HepG2 (cell line): ENCODE measurements at regions of chr19 and their contacts with region 1.

Region 1: DNA sequence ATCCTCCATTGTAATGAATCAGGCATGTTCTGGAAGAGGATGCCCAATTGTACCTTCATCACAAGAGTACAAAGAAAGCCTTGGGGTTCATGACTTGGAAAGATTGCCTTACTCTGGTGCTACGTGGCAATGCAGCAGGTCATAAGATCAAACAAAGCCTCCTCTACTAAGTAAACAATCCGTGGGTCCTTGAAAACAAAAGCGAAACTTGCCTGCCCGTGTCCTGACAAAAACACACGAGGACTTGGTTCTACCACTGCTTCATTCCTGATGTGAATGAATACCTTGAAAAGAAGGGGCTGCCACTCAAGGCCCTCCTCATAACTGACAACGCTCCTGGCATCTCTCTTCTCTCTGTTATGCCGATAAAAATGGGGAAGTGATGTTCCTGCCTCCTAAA is 18.9 kb downstream of the ZNF563 start:
- DNase-seq: peak; percentile 85
- ATAC-seq: peak; percentile 79
- H3K4me3 ChIP-seq: peak overlapping the region in 2 of 3 experiments; percentile 34 to 38; a peak in 2 of 6 replicates
- H3K27ac ChIP-seq: peak overlapping the region; percentile 75
- H3K4me1 ChIP-seq: peaks cover 25% of the 10 kb centered on the region
- H3K27me3 ChIP-seq: no peaks in the 10 kb centered on the region
- CTCF ChIP-seq: no peak
- EP300 ChIP-seq: no peak
- POLR2A ChIP-seq: no peak
- RAD21 ChIP-seq: no peak

Region 2: DNA sequence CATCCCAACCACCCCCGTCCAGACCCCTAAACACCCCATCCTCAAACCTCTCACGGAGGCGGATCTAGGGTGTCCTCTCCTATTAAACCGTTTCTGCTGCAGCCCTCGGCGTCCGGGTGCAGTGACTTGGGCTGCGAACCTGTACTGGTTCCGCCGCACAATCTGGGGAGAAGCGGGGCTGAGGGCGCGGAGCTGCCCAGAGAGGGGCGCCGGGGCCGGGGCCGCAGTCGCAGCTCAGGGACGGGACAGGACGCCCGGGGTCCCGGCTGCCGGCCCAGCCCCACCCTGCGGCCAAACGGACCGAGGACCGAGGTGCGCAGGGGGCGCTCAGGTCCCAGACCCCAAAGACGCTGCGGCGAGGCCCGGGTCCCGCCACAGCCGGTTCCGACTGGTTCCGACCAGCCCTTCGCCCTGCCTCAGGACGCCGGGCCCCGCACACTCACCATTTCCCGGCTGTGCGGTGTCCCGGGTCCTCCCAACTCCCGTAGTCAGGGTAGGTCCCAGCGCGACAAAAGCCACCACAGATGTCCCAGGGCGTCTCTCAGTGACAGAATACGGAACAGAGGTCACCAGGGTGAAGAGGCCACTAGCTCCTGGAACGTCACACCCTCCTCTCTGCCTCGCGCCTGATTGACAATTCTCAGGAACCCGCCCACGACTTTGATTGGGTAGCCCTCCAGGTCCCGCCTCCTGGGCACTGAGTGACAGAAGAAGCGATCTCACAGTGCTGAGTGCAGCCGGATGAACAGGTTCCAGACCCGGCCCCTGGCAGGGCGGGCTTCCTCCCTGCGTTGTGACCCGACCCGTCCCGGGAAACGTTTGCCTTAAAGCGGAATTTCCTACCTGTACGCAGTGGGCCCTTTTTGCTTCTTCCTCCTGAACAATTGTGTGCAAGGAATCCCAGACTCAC is 20.0 kb before region 1 on chr19 and contains the start of gene ZNF44:
- CTCF ChIA-PET with region 1: no interaction called
- POLR2A ChIA-PET with region 1: interaction called, 22 read pairs
- in situ Hi-C with region 1: no loop called
- intact Hi-C with region 1: no loop called
- DNase-seq: peak; percentile 99
- ATAC-seq: peak; percentile 94
- H3K4me3 ChIP-seq: peak within 1 kb of the TSS; percentile 83 to 97 (median 89)
- H3K27ac ChIP-seq: peak within 1 kb of the TSS; percentile 91
- H3K4me1 ChIP-seq: peaks cover 39% of the 10 kb centered on the region
- H3K27me3 ChIP-seq: no peaks in the 10 kb centered on the region
- CTCF ChIP-seq: peak; percentile 24; the same call in 1 of the 2 replicates
- EP300 ChIP-seq: 0 out of 4 replicates have a peak, but pooled peaks of 1 of the 2 experiments have one; percentile 15
- POLR2A ChIP-seq: peak; percentile 89 to 94
- RAD21 ChIP-seq: peak; percentile 34; the same call in 1 of the 2 replicates
- total RNA-seq, gene ZNF44: 15.7 and 16.6 TPM in 2 replicates

Region 3: DNA sequence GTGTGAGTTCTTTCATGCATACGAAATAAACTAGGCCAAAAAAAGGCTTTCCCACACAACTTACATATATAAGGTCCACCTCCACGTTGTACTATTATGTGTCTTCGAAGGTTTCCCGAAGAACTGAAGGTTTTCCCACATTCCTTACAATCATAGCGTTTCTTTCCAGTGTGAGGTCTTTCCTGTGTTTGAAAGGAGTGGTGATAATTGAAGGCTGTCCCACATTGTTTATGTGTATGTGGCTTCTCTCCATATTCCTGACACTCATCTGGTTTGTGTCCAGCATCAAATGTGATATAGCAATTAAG is 36.3 kb after region 1 on chr19:
- CTCF ChIA-PET with region 1: no interaction called
- POLR2A ChIA-PET with region 1: no interaction called
- in situ Hi-C with region 1: no loop called
- intact Hi-C with region 1: no loop called
- DNase-seq: no peak
- ATAC-seq: no peak
- H3K4me3 ChIP-seq: no peak overlapping the region
- H3K27ac ChIP-seq: no peak overlapping the region
- H3K4me1 ChIP-seq: no peaks in the 10 kb centered on the region
- H3K27me3 ChIP-seq: no peaks in the 10 kb centered on the region
- CTCF ChIP-seq: no peak
- EP300 ChIP-seq: no peak
- POLR2A ChIP-seq: no peak
- RAD21 ChIP-seq: no peak